HAP-1 (cell line): ENCODE measurements at regions of chr5 and their contacts with region 1.

Region 1: GRCh38 chr5:31232273-31232888 is 38.9 kb downstream of the CDH6 start:
- DNase-seq: peak; percentile 67 to 80
- H3K4me3 ChIP-seq: no peak overlapping the region
- H3K4me1 ChIP-seq: peaks cover 37% of the 10 kb centered on the region
- H3K27me3 ChIP-seq: no peaks in the 10 kb centered on the region

Region 2: GRCh38 chr5:30040488-30041118 is 1191.8 kb before region 1 on chr5:
- in situ Hi-C with region 1: loop called (anchors 25 kb)
- DNase-seq: peak; percentile 82
- H3K4me3 ChIP-seq: no peak overlapping the region
- H3K4me1 ChIP-seq: peaks cover 5% of the 10 kb centered on the region; the same call in 1 of the 2 replicates
- H3K27me3 ChIP-seq: no peaks in the 10 kb centered on the region

Region 3: DNA sequence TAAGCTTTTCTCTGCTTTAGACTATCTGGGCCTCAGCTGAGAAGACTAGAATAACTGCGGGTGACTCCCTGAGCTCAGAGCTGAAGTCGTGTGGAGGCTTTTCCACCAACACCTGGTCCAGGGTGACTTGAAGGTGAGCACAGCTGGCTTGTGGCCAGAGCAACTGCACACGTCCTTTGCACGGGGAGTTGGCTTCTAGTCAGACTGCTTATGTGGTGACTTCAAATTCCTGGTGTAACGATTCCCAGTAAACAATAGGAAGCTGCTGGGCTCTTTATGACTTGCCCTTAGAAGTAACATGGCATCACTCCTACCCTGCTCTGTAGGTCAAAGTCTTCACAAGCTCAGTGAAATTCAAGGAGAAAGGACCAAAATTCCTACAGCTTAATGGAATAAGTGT is 839.5 kb before region 1 on chr5:
- in situ Hi-C with region 1: loop called (anchors 25 kb)
- DNase-seq: no peak
- H3K4me3 ChIP-seq: no peak overlapping the region
- H3K4me1 ChIP-seq: no peaks in the 10 kb centered on the region; the same call in 1 of the 2 replicates
- H3K27me3 ChIP-seq: no peaks in the 10 kb centered on the region